PC-9 (cell line): ENCODE measurements at regions of chr2 and their contacts with region 1.

Region 1: DNA sequence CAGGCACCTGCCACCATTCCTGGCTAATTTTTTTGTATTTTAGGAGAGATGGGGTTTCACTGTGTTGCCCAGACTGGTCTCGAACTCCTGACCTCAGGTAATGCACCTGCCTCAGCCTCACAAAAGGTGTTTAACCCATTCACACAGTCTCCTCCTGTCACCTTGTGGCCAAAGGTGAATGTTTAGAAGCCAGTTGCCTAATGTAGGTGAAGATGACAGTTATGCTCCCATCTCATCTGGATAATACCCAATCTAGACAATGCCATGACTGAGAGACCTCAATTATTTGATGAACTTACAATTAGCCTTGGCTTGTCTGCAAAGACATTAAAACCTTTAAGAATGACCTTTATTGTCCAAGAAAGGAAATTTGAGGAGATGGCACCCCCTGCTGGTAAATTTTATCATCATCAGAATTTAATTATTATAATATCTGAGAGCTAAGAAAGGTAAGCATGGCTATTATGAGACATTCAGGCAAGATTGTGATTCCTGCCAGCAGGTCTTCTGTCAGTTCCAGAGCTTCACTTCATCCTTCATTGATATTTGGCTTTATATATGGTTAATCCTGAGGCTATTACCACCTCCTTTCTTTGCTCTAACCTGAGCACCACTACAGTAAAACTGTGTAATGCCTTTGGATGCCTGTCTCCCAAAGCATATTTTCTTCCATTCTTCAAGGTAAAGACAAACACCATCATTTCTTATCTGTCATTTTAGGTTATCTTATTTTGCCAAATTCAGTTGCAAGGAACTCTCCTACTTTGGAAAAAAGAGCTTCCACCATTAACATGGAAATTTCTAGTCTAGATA is 117.6 kb downstream of the FAM124B start:
- DNase-seq: peak; percentile 48 to 52
- H3K4me3 ChIP-seq: no peak overlapping the region
- H3K27ac ChIP-seq: no peak overlapping the region
- H3K4me1 ChIP-seq: no peaks in the 10 kb centered on the region
- H3K27me3 ChIP-seq: no peaks in the 10 kb centered on the region
- CTCF ChIP-seq: peak; percentile 100

Region 2: GRCh38 chr2:222976521-222977076 is 1307.7 kb before region 1 on chr2:
- CTCF ChIA-PET with region 1: no interaction called
- POLR2A ChIA-PET with region 1: no interaction called
- intact Hi-C with region 1: loop called (anchors 5 kb)
- DNase-seq: peak in 1 of 2 experiments; percentile 83
- H3K4me3 ChIP-seq: no peak overlapping the region
- H3K27ac ChIP-seq: no peak overlapping the region
- H3K4me1 ChIP-seq: peaks cover 42% of the 10 kb centered on the region
- H3K27me3 ChIP-seq: no peaks in the 10 kb centered on the region
- CTCF ChIP-seq: no peak

Region 3: GRCh38 chr2:223674998-223675609 is 609.2 kb before region 1 on chr2:
- CTCF ChIA-PET with region 1: no interaction called
- POLR2A ChIA-PET with region 1: no interaction called
- intact Hi-C with region 1: loop called (anchors 10 kb)
- DNase-seq: peak; percentile 50 to 64
- H3K4me3 ChIP-seq: no peak overlapping the region
- H3K27ac ChIP-seq: no peak overlapping the region
- H3K4me1 ChIP-seq: no peaks in the 10 kb centered on the region
- H3K27me3 ChIP-seq: no peaks in the 10 kb centered on the region
- CTCF ChIP-seq: peak; percentile 94

Region 4: DNA sequence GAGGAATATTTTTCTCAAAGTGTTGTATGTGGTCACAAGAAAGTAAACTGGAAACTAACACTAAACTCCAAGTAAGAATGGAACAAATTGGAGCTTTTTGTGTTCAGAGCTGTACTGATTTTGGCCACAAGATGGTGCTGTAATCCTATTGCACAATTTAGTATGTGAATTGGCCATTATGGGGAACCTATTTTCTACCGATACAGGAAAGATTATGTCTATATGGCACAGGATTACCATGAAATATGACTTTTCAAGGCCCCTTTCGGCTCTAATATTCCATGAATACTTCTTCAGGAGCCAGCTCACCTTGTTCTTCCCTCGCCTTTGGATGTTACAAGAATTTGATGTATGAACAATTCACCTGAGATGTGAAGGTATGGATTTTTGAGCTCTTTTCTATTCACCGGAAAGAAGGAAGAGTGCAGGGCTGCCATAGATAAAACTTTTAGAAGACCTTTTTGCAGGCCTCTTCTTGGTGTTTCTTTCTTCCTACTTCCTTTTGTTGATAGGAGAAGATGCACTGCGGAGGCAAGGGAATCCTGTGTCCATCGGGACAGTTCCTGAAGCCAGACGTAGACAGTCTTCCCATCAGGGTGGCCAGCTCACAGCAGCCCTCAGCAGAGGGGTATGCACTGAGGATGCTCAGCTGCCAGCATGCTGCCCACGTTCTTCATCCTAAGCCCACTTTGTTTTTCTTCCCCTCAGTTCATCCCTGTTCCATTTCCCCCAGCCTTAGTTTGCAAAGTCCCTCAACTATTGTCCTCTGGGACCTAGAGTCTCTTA is 313.8 kb before region 1 on chr2:
- CTCF ChIA-PET with region 1: interaction called, 53 read pairs
- POLR2A ChIA-PET with region 1: no interaction called
- intact Hi-C with region 1: loop called (anchors 1 kb)
- DNase-seq: peak; percentile 64 to 65
- H3K4me3 ChIP-seq: no peak overlapping the region
- H3K27ac ChIP-seq: no peak overlapping the region
- H3K4me1 ChIP-seq: no peaks in the 10 kb centered on the region
- H3K27me3 ChIP-seq: no peaks in the 10 kb centered on the region
- CTCF ChIP-seq: peak; percentile 100

Region 5: GRCh38 chr2:224039124-224039940 is 245.0 kb before region 1 on chr2 and contains the start of gene SERPINE2:
- CTCF ChIA-PET with region 1: interaction called, 9 read pairs
- POLR2A ChIA-PET with region 1: interaction called, 17 read pairs
- intact Hi-C with region 1: loop called (anchors 1 kb)
- DNase-seq: peak; percentile 67 to 91
- H3K4me3 ChIP-seq: peak within 1 kb of the TSS; percentile 57
- H3K27ac ChIP-seq: no peak within 1 kb of the TSS
- H3K4me1 ChIP-seq: peaks cover 20% of the 10 kb centered on the region
- H3K27me3 ChIP-seq: no peaks in the 10 kb centered on the region
- CTCF ChIP-seq: peak; percentile 77
- total RNA-seq, gene SERPINE2: 110 and 155 TPM in 2 replicates

Region 6: GRCh38 chr2:224145751-224146355 is 138.5 kb before region 1 on chr2:
- CTCF ChIA-PET with region 1: interaction called, 9 read pairs
- POLR2A ChIA-PET with region 1: no interaction called
- intact Hi-C with region 1: loop called (anchors 1 kb)
- DNase-seq: peak; percentile 36 to 51
- H3K4me3 ChIP-seq: no peak overlapping the region
- H3K27ac ChIP-seq: 0 out of 2 replicates have a peak overlapping the region, but pooled peaks have one; percentile 5
- H3K4me1 ChIP-seq: peaks cover 72% of the 10 kb centered on the region
- H3K27me3 ChIP-seq: no peaks in the 10 kb centered on the region
- CTCF ChIP-seq: no peak

Region 7: DNA sequence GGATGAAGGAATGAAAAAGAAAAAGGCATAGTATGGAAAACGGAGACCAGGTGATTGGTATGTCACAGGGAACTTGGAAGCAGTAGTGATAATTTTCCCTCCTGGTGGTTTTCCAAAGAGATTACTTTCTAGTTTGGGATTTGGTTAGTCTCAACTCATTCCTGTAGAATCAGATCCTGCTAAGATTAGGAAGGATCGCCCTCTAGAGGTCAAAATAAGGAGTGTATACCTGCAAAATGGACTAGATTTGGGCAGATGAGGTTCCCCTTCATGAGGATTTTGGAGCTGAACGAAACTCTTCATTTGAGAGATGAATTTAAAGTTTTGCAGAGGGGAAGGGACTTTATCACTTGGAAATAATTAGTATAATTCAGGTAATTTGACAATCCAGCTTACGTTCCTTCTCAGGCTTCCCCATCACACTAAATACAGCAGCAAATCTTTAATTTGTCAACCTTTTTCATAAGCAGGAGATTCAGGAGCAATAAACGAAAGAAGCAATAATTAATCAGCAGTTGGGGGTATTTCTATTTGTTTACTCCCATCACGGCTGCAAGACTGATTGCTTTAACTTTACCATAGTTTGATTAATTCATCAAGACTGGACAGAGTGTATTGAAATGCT is 366.6 kb after region 1 on chr2:
- CTCF ChIA-PET with region 1: no interaction called
- POLR2A ChIA-PET with region 1: no interaction called
- intact Hi-C with region 1: loop called (anchors 2 kb)
- DNase-seq: peak; percentile 43 to 75
- H3K4me3 ChIP-seq: no peak overlapping the region
- H3K27ac ChIP-seq: no peak overlapping the region
- H3K4me1 ChIP-seq: peaks cover 6% of the 10 kb centered on the region
- H3K27me3 ChIP-seq: no peaks in the 10 kb centered on the region
- CTCF ChIP-seq: peak; percentile 100